ENCODE measurements at regions of chr18 and their contacts with region 1.

Region 1: DNA sequence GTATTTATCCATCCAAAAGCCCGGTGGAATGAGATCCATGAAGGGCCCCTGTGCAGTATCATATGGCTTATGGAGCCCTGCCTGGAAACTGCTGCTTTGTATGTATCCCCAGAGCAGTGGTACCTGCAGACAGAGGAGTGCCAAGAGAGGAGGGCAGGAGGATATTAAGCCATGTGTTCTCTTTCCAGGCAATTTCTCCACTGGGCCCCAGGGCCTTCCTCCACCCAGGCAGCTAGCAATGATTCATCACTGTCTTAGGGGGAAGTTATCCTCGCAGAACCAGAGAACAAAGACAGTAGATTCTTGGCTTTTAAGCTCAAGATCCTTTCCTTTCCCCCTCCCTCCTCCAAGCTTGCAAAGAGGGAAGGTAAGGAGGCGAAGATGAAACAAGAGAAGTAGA is 98.1 kb downstream of the LRRC30 start:
- DNase-seq: no peak
- CTCF ChIP-seq: no peak

Region 2: DNA sequence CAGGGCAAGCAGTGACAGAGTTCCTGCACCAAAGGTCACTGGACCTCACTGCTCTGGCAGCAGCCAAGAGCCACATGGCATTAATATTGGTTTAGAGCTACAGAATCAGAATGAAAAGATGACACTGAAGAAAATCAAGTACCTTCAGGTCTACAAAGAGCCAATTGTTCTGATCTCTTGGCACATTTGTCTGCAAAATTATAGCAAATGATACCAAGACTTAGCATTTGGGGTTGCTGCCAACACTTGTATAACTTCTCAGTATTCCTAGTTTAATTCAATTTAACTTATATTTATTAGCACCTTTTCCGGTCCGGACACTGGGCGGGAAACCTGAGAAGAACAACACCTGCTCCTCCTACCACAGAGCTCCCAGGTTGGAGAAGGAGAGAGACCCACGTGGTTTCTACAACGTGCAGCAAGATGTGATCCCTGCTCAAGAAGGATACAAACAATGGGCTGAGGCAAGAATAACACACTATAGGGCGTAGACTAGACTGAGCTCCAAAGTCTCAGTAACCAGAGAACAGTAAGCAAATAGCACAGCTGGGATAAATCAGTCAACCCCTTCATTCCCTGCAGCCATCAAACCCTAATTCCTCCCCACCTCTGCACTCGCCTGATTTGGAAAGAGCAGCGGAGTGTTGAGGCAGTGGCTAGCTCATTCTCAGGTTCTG is 95.7 kb before region 1 on chr18:
- in situ Hi-C with region 1: loop called (anchors 25 kb)
- DNase-seq: no peak
- CTCF ChIP-seq: no peak

Measured in GM13976 (cell line).